PC-3 (cell line): ENCODE measurements at regions of chr2 and their contacts with region 1.

Region 1: GRCh38 chr2:58571181-58571852 is 330.2 kb upstream of the FANCL start:
- DNase-seq: peak; percentile 86
- ATAC-seq: peak; percentile 87
- H3K4me3 ChIP-seq: no peak overlapping the region
- H3K27ac ChIP-seq: no peak overlapping the region
- H3K4me1 ChIP-seq: peaks cover 21% of the 10 kb centered on the region
- H3K27me3 ChIP-seq: no peaks in the 10 kb centered on the region
- CTCF ChIP-seq: peak; percentile 91

Region 2: GRCh38 chr2:57759822-57760300 is 811.5 kb before region 1 on chr2:
- CTCF ChIA-PET with region 1: no interaction called
- POLR2A ChIA-PET with region 1: no interaction called
- intact Hi-C with region 1: loop called (anchors 1 kb)
- DNase-seq: peak; percentile 93
- ATAC-seq: peak; percentile 96
- H3K4me3 ChIP-seq: peak overlapping the region; percentile 45; the same call in 1 of the 2 replicates
- H3K27ac ChIP-seq: peak overlapping the region; percentile 54
- H3K4me1 ChIP-seq: peaks cover 23% of the 10 kb centered on the region
- H3K27me3 ChIP-seq: no peaks in the 10 kb centered on the region
- CTCF ChIP-seq: peak; percentile 95

Region 3: DNA sequence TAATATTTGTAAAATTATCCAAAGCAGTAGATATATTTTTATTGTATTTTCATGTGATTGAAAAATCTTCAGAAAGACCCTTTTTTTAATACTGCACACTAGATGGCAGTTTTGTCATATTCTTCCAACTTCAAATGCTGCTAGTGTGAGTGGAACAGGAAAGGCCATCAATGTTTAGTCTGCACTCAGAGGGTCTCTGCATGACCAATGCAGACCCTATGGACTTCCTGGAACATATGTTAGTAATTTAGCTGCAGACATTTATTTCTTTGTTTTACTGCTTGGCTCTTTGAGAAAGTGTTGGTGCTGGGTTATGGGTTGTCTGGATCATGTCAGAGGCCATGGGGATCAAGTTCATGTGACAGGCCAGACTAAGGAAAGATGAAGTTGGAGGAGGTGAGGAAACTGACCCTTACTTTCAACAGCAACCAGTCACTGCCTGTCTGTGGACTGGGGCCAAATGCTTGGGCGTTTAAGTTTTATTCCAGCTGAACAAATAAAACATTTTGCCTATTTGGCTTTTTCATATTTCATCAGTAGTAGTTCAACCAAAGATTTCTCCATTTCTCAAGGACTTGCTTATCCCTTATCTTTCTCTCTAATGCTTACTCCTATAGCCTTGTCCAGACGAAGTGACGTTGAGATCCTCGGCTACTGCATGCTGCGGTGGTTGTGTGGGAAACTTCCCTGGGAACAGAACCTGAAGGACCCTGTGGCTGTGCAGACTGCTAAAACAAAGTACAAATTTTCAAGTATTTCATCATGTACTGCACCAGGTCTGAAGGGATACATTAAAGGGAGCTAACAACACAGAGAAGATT is 439.9 kb before region 1 on chr2:
- CTCF ChIA-PET with region 1: no interaction called
- POLR2A ChIA-PET with region 1: no interaction called
- intact Hi-C with region 1: loop called (anchors 1 kb)
- DNase-seq: no peak
- ATAC-seq: peak; percentile 43; the same call in 1 of the 2 replicates
- H3K4me3 ChIP-seq: no peak overlapping the region
- H3K27ac ChIP-seq: no peak overlapping the region
- H3K4me1 ChIP-seq: 0 out of 2 replicates have a peak, but pooled peaks cover 7% of the 10 kb centered on the region
- H3K27me3 ChIP-seq: no peaks in the 10 kb centered on the region
- CTCF ChIP-seq: peak; percentile 49

Region 4: DNA sequence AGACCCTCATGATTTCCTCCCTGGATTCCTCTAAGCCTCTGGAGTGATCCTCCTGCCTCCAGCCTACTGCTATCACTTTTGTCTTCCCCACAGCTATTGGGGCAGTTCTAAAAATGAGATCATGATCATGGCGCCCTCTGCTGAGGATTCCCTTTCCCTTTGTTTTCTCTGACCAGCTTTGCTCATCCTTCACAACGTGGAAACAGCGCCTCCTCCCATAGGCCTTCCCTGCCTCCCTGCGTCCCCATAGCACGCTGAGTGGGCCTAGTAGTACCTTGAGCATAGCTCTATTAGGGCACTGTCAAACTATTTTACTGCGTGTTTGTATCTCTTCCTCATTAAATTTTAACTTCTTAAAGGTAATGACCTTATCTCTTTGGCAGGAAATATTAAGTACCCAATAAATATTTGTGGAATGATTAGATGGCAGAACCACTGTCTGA is 123.2 kb before region 1 on chr2:
- CTCF ChIA-PET with region 1: no interaction called
- POLR2A ChIA-PET with region 1: no interaction called
- intact Hi-C with region 1: loop called (anchors 2 kb)
- DNase-seq: peak; percentile 84
- ATAC-seq: peak; percentile 88
- H3K4me3 ChIP-seq: peak overlapping the region; percentile 27; the same call in 1 of the 2 replicates
- H3K27ac ChIP-seq: peak overlapping the region; percentile 69
- H3K4me1 ChIP-seq: peaks cover 27% of the 10 kb centered on the region
- H3K27me3 ChIP-seq: no peaks in the 10 kb centered on the region
- CTCF ChIP-seq: peak; percentile 94

Region 5: GRCh38 chr2:58633576-58634365 is 62.5 kb after region 1 on chr2:
- CTCF ChIA-PET with region 1: interaction called, 5 read pairs
- POLR2A ChIA-PET with region 1: no interaction called
- intact Hi-C with region 1: loop called (anchors 1 kb)
- DNase-seq: peak; percentile 94
- ATAC-seq: peak; percentile 75
- H3K4me3 ChIP-seq: no peak overlapping the region
- H3K27ac ChIP-seq: peak overlapping the region; percentile 82
- H3K4me1 ChIP-seq: peaks cover 32% of the 10 kb centered on the region
- H3K27me3 ChIP-seq: no peaks in the 10 kb centered on the region
- CTCF ChIP-seq: no peak

Region 6: GRCh38 chr2:58762176-58762781 is 191.0 kb after region 1 on chr2:
- CTCF ChIA-PET with region 1: no interaction called
- POLR2A ChIA-PET with region 1: no interaction called
- intact Hi-C with region 1: loop called (anchors 1 kb)
- DNase-seq: peak; percentile 86
- ATAC-seq: peak; percentile 96
- H3K4me3 ChIP-seq: no peak overlapping the region
- H3K27ac ChIP-seq: no peak overlapping the region
- H3K4me1 ChIP-seq: 0 out of 2 replicates have a peak, but pooled peaks cover 3% of the 10 kb centered on the region
- H3K27me3 ChIP-seq: peaks cover 53% of the 10 kb centered on the region
- CTCF ChIP-seq: peak; percentile 89